Endothelial cell of umbilical vein (primary cell): ENCODE measurements at regions of chr12 and their contacts with region 1.

Region 1: DNA sequence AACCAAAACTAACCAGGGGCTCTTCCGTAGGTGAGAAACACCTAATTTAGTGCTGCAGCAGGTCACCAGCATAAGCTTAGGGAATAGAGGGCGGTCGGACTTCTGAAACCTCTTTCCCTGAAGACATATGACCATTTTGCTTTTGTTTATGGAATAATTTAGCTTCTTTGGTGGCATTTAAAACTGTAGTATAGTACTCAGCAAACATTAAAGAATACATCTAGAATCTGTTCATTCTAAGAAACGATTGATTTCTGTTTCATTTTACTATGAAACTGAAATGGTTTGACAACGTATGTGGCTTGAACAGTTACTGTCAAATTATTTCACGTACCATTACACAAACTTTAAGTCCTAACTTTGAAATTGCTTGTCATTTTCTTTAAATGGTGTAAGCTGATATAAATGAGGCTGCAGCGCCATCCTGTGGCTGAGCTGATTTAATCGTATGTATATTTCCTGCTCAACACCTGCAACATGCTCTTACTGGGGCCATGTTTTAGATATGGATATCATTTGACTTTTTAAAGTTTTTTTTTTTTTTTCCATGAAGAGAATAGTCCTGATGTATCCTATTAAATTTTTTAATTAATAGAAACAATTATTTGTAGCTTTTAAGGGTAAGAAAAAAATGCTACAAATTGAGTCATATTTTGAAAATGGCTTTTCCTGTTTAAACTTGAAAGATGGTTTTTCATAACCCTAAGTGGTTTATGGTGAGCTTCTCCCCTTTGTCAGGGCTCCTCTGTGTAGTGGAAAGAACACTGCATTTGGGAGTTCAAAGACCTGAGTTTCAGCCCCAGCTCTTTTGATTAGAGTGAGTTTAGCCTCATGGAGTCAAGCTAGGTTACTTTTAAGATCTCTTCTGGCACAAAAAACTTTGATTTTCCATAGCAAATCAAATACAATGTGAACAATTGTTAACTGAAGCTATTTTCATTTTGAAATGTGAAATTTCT is 27.4 kb downstream of the CFAP54 start:
- DNase-seq: peak; percentile 94
- H3K4me3 ChIP-seq: no peak overlapping the region
- H3K27ac ChIP-seq: peak overlapping the region; percentile 69
- H3K4me1 ChIP-seq: peaks cover 16% of the 10 kb centered on the region
- H3K27me3 ChIP-seq: no peaks in the 10 kb centered on the region
- CTCF ChIP-seq: peak; percentile 29 to 35
- POLR2A ChIP-seq: no peak

Region 2: GRCh38 chr12:96219698-96220206 is 297.0 kb before region 1 on chr12:
- CTCF ChIA-PET with region 1: interaction called, 11 read pairs
- POLR2A ChIA-PET with region 1: no interaction called
- dilution Hi-C with region 1: no loop called
- intact Hi-C with region 1: loop called (anchors 2 kb)
- DNase-seq: peak; percentile 96
- H3K4me3 ChIP-seq: no peak overlapping the region
- H3K27ac ChIP-seq: peak overlapping the region; percentile 90
- H3K4me1 ChIP-seq: peaks cover 93% of the 10 kb centered on the region
- H3K27me3 ChIP-seq: no peaks in the 10 kb centered on the region
- CTCF ChIP-seq: no peak
- POLR2A ChIP-seq: peak; percentile 63

Region 3: GRCh38 chr12:96263449-96263902 is 253.3 kb before region 1 on chr12:
- CTCF ChIA-PET with region 1: interaction called, 13 read pairs
- POLR2A ChIA-PET with region 1: interaction called, 3 read pairs
- dilution Hi-C with region 1: no loop called
- intact Hi-C with region 1: loop called (anchors 2 kb)
- DNase-seq: peak; percentile 88
- H3K4me3 ChIP-seq: no peak overlapping the region
- H3K27ac ChIP-seq: peak overlapping the region; percentile 60
- H3K4me1 ChIP-seq: peaks cover 49% of the 10 kb centered on the region
- H3K27me3 ChIP-seq: no peaks in the 10 kb centered on the region
- CTCF ChIP-seq: no peak
- POLR2A ChIP-seq: peak; percentile 67

Region 4: GRCh38 chr12:96427269-96427729 is 89.5 kb before region 1 on chr12:
- CTCF ChIA-PET with region 1: interaction called, 6 read pairs
- POLR2A ChIA-PET with region 1: no interaction called
- dilution Hi-C with region 1: no loop called
- intact Hi-C with region 1: loop called (anchors 1 kb)
- DNase-seq: peak; percentile 99
- H3K4me3 ChIP-seq: peak overlapping the region in 2 of 3 experiments; percentile 3 to 47
- H3K27ac ChIP-seq: peak overlapping the region; percentile 99
- H3K4me1 ChIP-seq: peaks cover 56% of the 10 kb centered on the region
- H3K27me3 ChIP-seq: no peaks in the 10 kb centered on the region
- CTCF ChIP-seq: no peak
- POLR2A ChIP-seq: no peak

Region 5: GRCh38 chr12:96501139-96501761 is 15.5 kb before region 1 on chr12:
- CTCF ChIA-PET with region 1: interaction called, 13 read pairs
- POLR2A ChIA-PET with region 1: no interaction called
- dilution Hi-C with region 1: no loop called
- intact Hi-C with region 1: no loop called
- DNase-seq: peak; percentile 94
- H3K4me3 ChIP-seq: peak overlapping the region in 1 of 3 experiments; percentile 9
- H3K27ac ChIP-seq: peak overlapping the region; percentile 99
- H3K4me1 ChIP-seq: peaks cover 46% of the 10 kb centered on the region
- H3K27me3 ChIP-seq: no peaks in the 10 kb centered on the region
- CTCF ChIP-seq: no peak
- POLR2A ChIP-seq: peak; percentile 91